Esophagus squamous epithelium (tissue), 5 donors: ENCODE measurements at regions of chr15 and their contacts with region 1.

Region 1: DNA sequence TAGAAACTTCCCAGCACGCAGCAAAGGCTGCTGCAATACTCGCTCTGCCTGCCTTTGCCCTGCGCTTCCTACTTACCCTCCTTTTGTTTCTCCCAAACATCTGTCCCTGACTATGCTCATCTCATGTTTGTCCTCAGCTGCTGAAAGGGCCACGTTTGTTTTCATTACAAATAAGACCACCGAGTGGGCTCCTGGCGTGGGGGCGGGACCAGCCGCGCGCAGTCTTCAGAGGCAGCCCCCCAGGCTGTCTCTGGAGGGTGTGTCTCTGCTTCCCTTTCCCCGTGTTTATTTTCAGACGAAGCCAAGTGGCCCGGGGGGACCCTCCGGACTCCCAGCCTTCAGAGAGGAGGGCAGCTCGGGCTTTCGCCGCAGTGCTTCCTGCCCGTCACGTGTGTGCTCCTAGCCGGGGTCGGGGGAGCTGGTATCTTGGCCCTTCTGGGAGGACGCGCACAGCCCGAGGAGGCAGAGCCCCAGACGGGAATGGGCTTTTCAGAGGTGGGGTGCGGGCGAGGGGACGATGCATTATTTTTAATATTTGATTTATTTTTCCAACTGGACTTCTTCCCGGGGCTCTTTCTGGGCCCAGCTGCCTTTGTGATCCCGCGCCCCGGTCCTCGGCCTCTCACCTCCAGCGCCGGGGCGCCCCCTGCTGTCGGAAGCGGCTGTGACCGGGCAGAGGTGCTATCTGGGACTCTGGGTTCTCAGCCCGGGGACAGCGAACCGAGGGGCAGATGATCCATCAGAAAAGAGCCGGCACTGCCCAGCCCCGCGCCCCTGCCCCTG is 70.0 kb upstream of the CGNL1 start:
- DNase-seq: peak; percentile 35
- H3K4me3 ChIP-seq: peak overlapping the region; percentile 34 to 78 (median 56)
- H3K27ac ChIP-seq: peak overlapping the region in 3 of 4 donors; percentile 16 to 71 (median 38)
- H3K4me1 ChIP-seq: peaks cover 8 to 20% (median 12%) of the 10 kb centered on the region in 3 donors
- H3K27me3 ChIP-seq: no peaks in the 10 kb centered on the region
- CTCF ChIP-seq: peak; percentile 82 to 94 (median 88)
- POLR2A ChIP-seq: no peak

Region 2: DNA sequence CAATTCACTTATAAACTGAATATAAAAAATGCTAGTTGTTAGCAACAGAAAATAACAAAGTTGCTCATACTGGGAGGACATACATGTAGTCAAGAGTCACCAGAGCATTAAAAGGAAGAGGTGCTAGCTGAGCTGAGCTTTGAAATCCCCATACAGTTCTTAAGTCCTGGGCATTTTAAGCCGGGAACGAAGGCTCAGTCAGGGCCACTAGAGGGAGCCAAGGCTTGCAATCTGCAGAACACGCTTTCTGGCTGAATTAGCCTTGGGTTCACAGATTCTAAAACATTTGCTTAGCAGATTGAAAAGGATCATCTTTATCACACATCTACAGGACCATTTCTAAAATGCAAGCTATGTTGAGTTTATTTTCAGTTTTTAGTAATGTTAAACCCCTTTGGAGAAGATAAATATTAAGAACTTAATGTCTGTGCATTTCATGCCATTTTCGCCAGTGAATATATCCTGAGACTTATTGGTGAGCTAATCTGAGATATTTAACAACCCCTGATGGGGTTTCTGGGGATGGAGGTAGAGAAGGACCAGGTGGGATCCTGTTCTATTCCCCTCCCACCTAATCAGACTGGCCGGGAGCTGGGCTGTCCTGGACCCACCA is 815.1 kb before region 1 on chr15:
- intact Hi-C with region 1: loop called (anchors 10 kb)
- DNase-seq: no peak
- H3K4me3 ChIP-seq: no peak overlapping the region
- H3K27ac ChIP-seq: no peak overlapping the region
- H3K4me1 ChIP-seq: no peaks in the 10 kb centered on the region
- H3K27me3 ChIP-seq: no peaks in the 10 kb centered on the region
- CTCF ChIP-seq: peak; percentile 41 to 75 (median 72)
- POLR2A ChIP-seq: no peak

Region 3: DNA sequence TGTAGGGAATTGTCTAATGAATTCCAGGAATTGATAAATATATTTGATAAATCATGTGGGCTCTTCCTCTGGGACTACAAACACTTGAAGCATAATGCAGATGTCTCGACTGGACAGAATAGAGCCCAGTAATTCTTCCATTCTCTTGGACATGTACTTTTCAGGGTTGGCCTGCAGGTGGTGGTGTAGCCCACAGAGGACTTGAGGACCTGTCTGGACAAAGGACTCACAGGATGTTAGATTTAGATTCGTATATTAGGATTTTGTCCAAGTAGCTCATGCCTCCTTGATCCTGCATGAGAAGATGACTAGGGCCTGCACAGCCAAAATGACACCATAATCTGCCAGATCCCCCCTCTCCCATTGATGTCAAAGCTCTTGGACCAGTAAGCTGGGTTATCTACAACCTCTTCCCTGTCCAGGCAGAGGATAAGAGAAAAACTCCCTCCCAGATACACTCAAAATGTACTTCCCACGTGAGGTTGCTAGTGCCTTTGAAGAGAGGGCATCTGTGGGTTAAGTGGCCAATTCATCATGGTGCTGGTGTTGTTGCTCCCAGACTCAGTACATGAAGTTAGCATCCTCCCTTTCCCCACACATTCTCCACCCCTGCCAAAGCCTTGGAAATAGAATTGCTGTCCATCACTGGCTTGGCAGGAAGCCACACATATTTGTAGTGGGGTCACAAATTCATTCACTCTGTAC is 484.5 kb before region 1 on chr15:
- intact Hi-C with region 1: loop called (anchors 10 kb)
- DNase-seq: no peak
- H3K4me3 ChIP-seq: no peak overlapping the region
- H3K27ac ChIP-seq: no peak overlapping the region
- H3K4me1 ChIP-seq: peaks cover 0 to 17% (median 0%) of the 10 kb centered on the region in 3 donors
- H3K27me3 ChIP-seq: no peaks in the 10 kb centered on the region
- CTCF ChIP-seq: peak in 5 of 6 experiments; percentile 47 to 75 (median 55)
- POLR2A ChIP-seq: no peak

Region 4: GRCh38 chr15:57146506-57147201 is 159.7 kb before region 1 on chr15:
- intact Hi-C with region 1: loop called (anchors 5 kb)
- DNase-seq: no peak
- H3K4me3 ChIP-seq: peak overlapping the region in 2 of 4 donors; percentile 19 to 40
- H3K27ac ChIP-seq: peak overlapping the region in 2 of 4 donors; percentile 23 to 29
- H3K4me1 ChIP-seq: peaks cover 9 to 58% (median 18%) of the 10 kb centered on the region in 3 donors
- H3K27me3 ChIP-seq: no peaks in the 10 kb centered on the region
- CTCF ChIP-seq: peak; percentile 49 to 76 (median 74)
- POLR2A ChIP-seq: no peak

Region 5: DNA sequence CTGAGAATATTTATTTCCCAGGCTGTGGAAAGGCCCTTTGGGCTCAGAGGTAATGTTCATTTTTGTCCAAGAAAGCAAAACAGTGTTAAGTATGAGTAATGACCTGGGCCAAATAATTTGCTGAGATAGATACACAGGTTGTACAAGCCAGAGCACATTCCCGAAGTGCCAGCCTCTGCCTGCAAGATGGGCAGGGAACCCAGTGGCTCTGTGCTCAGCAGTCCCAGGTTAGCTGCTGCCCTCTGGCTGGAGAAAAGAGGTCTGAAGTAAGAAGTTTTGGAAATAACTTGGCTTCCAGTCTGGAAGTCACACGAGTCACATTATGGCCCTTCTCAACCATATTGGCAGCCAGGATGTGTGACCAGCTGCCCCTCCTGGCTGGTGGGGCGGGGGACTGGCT is 305.6 kb after region 1 on chr15:
- intact Hi-C with region 1: no loop called
- DNase-seq: no peak
- H3K4me3 ChIP-seq: no peak overlapping the region
- H3K27ac ChIP-seq: peak overlapping the region in 3 of 4 donors; percentile 66 to 74 (median 69)
- H3K4me1 ChIP-seq: peaks cover 9 to 56% (median 27%) of the 10 kb centered on the region in 3 donors
- H3K27me3 ChIP-seq: no peaks in the 10 kb centered on the region
- CTCF ChIP-seq: peak; percentile 18 to 81 (median 60)
- POLR2A ChIP-seq: no peak